ENCODE measurements at regions of chr11 and their contacts with region 1.

Region 1: DNA sequence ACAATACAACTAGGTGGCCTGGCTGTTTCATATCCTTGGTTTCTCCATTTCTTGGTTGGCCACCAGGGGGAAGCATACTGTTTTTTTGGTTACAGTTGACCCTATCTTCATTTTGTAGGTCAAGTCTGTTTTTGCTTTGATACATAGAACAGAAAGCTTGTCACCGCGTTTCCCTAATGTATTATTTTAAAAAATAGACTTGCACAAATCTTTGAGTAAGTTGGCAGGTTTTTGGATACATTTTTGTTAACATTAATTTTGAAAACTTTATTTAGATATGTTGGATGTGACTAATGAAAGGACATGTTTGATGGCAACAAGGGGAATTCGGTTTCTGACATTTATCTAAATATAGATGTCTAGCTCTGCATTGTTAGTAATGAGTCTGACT is 3.0 kb downstream of the NCR3LG1 start:
- DNase-seq: peak; percentile 80
- ATAC-seq: no peak
- H3K4me3 ChIP-seq: no peak overlapping the region
- H3K4me3 Mint-ChIP-seq: peak overlapping the region; percentile 95
- H3K27ac ChIP-seq: no peak overlapping the region
- H3K27ac Mint-ChIP-seq: no peak overlapping the region
- H3K4me1 ChIP-seq: peaks cover 29 to 34% of the 10 kb centered on the region in 2 donors
- H3K4me1 Mint-ChIP-seq: peaks cover 32% of the 10 kb centered on the region
- H3K27me3 ChIP-seq: peaks cover 0 to 34% (median 21%) of the 10 kb centered on the region in 4 experiments
- H3K27me3 Mint-ChIP-seq: peaks cover 33% of the 10 kb centered on the region
- CTCF ChIP-seq: peak; percentile 82

Region 2: GRCh38 chr11:16738193-16738946 is 616.2 kb before region 1 on chr11 and contains the start of gene C11orf58:
- CTCF ChIA-PET with region 1: no interaction called
- POLR2A ChIA-PET with region 1: no interaction called
- intact Hi-C with region 1: loop called (anchors 10 kb)
- DNase-seq: peak; percentile 98
- ATAC-seq: peak; percentile 97
- H3K4me3 ChIP-seq: peak within 1 kb of the TSS; percentile 86 to 97 (median 95)
- H3K4me3 Mint-ChIP-seq: peak within 1 kb of the TSS; percentile 73
- H3K27ac ChIP-seq: peak within 1 kb of the TSS; percentile 98 to 99
- H3K27ac Mint-ChIP-seq: peak within 1 kb of the TSS; percentile 66
- H3K4me1 ChIP-seq: peaks cover 25 to 28% of the 10 kb centered on the region in 2 donors
- H3K4me1 Mint-ChIP-seq: peaks cover 20% of the 10 kb centered on the region
- H3K27me3 ChIP-seq: no peaks in the 10 kb centered on the region
- H3K27me3 Mint-ChIP-seq: no peaks in the 10 kb centered on the region
- CTCF ChIP-seq: no peak
- total RNA-seq, gene C11orf58: 125 and 129 TPM in 2 replicates

Region 3: DNA sequence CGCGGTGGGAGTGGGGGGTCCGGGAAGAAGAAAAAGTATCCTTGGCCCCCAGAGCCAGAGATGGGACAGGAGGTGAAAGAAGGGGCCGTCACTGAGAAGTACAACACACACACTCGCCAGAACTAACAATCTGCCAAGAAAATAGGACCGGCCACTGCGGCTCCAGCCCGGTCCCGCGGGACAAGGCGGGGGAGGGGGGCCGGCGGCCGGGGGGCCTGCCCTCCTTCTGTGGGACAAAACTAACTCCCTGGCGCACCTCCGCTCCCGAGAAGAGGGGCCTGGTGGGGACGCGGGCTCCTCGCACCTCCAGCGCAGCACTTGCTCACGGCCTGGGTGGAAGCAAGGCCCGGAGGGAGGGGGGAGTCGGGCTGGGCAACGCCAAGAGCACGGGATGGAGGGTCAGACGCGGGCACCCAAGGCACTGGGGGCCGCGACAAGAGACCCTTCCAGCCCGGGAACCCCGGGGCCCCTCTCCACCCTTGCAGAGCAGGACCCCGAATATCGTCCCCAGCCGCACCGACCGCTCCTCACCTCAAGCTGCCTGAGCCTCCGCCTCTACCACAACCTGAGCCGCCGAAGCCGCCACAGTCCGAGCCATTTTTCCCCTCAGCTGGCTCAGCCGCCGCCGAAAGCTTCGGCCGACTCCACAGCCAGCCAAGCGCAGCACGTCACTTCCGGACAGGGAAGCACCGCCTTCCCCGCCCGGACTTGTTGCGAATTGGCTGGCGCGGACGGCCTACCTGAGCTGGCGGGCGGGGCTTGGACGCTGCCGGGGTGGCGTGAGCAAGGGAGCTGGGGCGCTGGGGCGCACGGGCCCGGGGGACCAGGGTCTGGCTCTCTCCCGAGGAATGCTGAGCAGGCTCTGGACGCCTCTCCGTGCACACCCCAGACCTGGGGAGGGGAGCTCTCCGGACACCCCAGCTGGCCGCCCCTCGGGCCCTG is 147.0 kb before region 1 on chr11 and contains the start of gene PIK3C2A:
- CTCF ChIA-PET with region 1: no interaction called
- POLR2A ChIA-PET with region 1: no interaction called
- intact Hi-C with region 1: loop called (anchors 2 kb)
- DNase-seq: peak; percentile 95
- ATAC-seq: peak; percentile 96
- H3K4me3 ChIP-seq: peak within 1 kb of the TSS; percentile 82 to 99 (median 96)
- H3K4me3 Mint-ChIP-seq: peak within 1 kb of the TSS; percentile 98
- H3K27ac ChIP-seq: peak within 1 kb of the TSS; percentile 96 to 98
- H3K27ac Mint-ChIP-seq: peak within 1 kb of the TSS; percentile 94
- H3K4me1 ChIP-seq: peaks cover 22 to 29% of the 10 kb centered on the region in 2 donors
- H3K4me1 Mint-ChIP-seq: peaks cover 38% of the 10 kb centered on the region
- H3K27me3 ChIP-seq: no peaks in the 10 kb centered on the region
- H3K27me3 Mint-ChIP-seq: no peaks in the 10 kb centered on the region
- CTCF ChIP-seq: no peak
- total RNA-seq, gene PIK3C2A: 48.8 and 54.9 TPM in 2 replicates

Region 4: GRCh38 chr11:17230867-17231851 is 123.4 kb before region 1 on chr11:
- CTCF ChIA-PET with region 1: interaction called, 5 read pairs
- POLR2A ChIA-PET with region 1: no interaction called
- intact Hi-C with region 1: loop called (anchors 5 kb)
- DNase-seq: peak; percentile 45
- ATAC-seq: peak; percentile 66
- H3K4me3 ChIP-seq: no peak overlapping the region
- H3K4me3 Mint-ChIP-seq: peak overlapping the region; percentile 30
- H3K27ac ChIP-seq: no peak overlapping the region
- H3K27ac Mint-ChIP-seq: no peak overlapping the region
- H3K4me1 ChIP-seq: peaks cover 4 to 17% of the 10 kb centered on the region in 2 donors
- H3K4me1 Mint-ChIP-seq: peaks cover 11% of the 10 kb centered on the region
- H3K27me3 ChIP-seq: no peaks in the 10 kb centered on the region
- H3K27me3 Mint-ChIP-seq: no peaks in the 10 kb centered on the region
- CTCF ChIP-seq: no peak

Measured in B cell (primary cell).